CD4-positive, alpha-beta T cell (primary cell): ENCODE measurements at regions of chr3 and their contacts with region 1.

Region 1: GRCh38 chr3:129399145-129399894 is 29.1 kb downstream of the EFCAB12 start:
- DNase-seq: peak; percentile 49 to 94 (median 61)
- ATAC-seq: peak; percentile 82
- H3K4me3 ChIP-seq: peak overlapping the region; percentile 82
- H3K4me3 Mint-ChIP-seq: peak overlapping the region; percentile 91
- H3K27ac ChIP-seq: peak overlapping the region; percentile 68 to 97
- H3K27ac Mint-ChIP-seq: peak overlapping the region; percentile 94
- H3K4me1 ChIP-seq: peaks cover 27% of the 10 kb centered on the region
- H3K4me1 Mint-ChIP-seq: peaks cover 38% of the 10 kb centered on the region
- H3K27me3 ChIP-seq: no peaks in the 10 kb centered on the region
- H3K27me3 Mint-ChIP-seq: no peaks in the 10 kb centered on the region
- CTCF ChIP-seq: peak; percentile 97

Region 2: DNA sequence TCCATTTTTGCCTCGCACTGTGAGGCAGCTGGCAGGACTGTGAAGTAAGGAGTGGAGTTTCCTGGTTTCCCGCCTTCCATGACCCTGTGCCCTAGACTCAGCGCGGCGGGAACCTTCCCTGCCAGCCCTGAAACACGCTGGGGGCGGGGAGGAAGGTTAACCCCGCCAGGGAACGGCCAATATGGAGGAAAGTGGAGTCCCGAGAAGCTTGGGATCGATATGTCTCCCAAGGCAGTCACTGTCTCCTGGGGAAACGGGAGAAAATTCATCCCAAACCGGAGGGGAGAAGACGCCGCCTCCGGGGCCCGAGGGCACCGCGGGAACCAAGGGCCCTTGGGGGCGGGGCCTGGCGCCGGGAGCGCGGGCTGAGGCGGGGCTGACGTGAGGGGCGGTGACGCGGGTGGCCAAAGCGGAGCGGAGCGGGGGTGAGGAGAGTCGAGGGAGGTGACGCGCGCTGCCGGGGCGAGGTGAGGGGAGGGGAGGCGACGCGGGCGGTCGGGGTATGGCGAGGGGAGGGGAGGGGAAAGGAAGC is 120.8 kb before region 1 on chr3 and contains the start of gene HMCES:
- CTCF ChIA-PET with region 1: no interaction called
- POLR2A ChIA-PET with region 1: interaction called, 4 read pairs
- intact Hi-C with region 1: loop called in 1 of 2 experiments (anchors 5 kb)
- DNase-seq: peak; percentile 91 to 98 (median 95)
- ATAC-seq: peak; percentile 92
- H3K4me3 ChIP-seq: peak within 1 kb of the TSS; percentile 79
- H3K4me3 Mint-ChIP-seq: peak within 1 kb of the TSS; percentile 97
- H3K27ac ChIP-seq: peak within 1 kb of the TSS; percentile 90 to 93
- H3K27ac Mint-ChIP-seq: peak within 1 kb of the TSS; percentile 95
- H3K4me1 ChIP-seq: peaks cover 45% of the 10 kb centered on the region
- H3K4me1 Mint-ChIP-seq: peaks cover 43% of the 10 kb centered on the region
- H3K27me3 ChIP-seq: no peaks in the 10 kb centered on the region
- H3K27me3 Mint-ChIP-seq: no peaks in the 10 kb centered on the region
- CTCF ChIP-seq: no peak
- total RNA-seq, gene HMCES: 63.5 to 64.0 TPM

Region 3: DNA sequence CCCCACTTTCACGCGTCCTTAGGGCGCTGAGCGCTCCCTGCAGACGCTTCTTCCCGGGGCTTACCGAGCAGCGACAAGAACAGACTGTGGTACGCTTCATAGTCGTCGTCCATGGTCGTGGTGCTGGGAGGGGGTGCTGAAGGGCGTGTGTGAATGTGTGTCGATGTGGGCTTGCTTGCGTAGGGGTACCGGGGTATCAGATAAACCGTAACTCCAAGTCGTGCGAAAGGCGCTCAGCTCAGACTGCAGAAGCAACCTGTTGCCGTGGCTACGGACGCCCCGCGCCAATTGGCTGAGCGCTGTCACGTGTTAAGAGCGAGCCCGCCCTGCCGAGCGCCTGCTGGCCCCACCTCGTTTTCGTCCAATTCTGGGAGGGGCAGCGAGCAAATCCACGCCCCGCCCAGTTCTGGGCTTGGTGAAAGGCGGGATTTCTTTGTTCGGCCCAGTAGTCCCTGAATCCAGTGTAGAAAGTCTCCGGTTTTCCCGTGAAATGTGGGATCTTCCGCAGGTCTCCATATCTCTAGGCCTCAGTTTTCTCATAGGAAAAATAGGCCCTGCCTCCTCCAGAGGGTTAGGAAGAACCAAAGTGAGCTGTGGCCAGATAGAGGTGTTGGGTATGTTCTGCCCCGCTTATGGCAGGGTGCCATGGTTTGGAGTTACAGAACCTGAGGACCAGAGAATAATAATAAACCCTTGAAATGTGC is 29.2 kb after region 1 on chr3 and contains the start of gene EFCAB12:
- CTCF ChIA-PET with region 1: interaction called, 10 read pairs
- POLR2A ChIA-PET with region 1: no interaction called
- intact Hi-C with region 1: loop called in 1 of 2 experiments (anchors 2 kb)
- DNase-seq: peak; percentile 79 to 95 (median 88)
- ATAC-seq: peak; percentile 95
- H3K4me3 ChIP-seq: peak within 1 kb of the TSS; percentile 66
- H3K4me3 Mint-ChIP-seq: peak within 1 kb of the TSS; percentile 78
- H3K27ac ChIP-seq: peak within 1 kb of the TSS in 1 of 2 donors; percentile 38
- H3K27ac Mint-ChIP-seq: peak within 1 kb of the TSS; percentile 73
- H3K4me1 ChIP-seq: peaks cover 15% of the 10 kb centered on the region
- H3K4me1 Mint-ChIP-seq: peaks cover 22% of the 10 kb centered on the region
- H3K27me3 ChIP-seq: no peaks in the 10 kb centered on the region
- H3K27me3 Mint-ChIP-seq: no peaks in the 10 kb centered on the region
- CTCF ChIP-seq: no peak
- total RNA-seq, gene EFCAB12: 3.2 to 3.4 TPM